Activated B cell treated with CpG ODN at 0.5 μM for 24 hours (primary cell): ENCODE measurements at regions of chr3 and their contacts with region 1.

Region 1: DNA sequence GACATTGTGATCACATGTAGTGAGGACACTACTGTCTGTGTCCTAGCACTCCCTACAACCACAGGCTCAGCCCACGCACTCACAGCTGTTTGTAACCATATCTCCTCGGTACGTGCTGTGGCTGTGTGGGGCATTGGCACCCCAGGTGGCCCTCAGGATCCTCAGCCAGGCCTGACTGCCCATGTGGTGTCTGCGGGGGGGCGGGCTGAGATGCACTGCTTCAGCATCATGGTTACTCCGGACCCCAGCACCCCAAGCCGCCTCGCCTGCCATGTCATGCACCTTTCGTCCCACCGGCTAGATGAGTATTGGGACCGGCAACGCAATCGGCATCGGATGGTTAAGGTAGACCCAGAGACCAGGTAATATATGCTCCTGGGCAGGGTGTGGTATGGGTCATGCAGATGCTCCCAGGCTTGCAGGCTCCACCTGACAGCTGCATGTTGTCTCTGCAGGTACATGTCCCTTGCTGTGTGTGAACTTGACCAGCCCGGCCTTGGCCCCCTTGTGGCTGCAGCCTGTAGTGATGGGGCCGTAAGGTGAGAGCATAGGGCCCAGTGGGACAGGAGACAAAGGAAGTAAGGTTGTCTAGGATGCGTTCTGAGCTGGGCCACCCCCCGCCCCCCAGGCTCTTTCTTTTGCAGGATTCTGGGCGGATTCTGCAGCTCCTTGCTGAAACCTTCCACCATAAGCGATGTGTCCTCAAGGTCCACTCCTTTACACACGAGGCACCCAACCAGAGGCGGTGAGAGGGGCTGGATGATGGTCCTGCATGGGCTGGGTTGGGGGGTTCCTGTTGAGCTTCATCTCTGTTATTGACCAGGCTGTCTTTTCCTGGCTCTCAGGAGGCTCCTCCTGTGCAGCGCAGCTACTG is 4.4 kb downstream of the DALRD3 start:
- DNase-seq: peak; percentile 57
- ATAC-seq: peak; percentile 63
- H3K4me3 Mint-ChIP-seq: no peak overlapping the region
- H3K27ac Mint-ChIP-seq: no peak overlapping the region
- H3K4me1 Mint-ChIP-seq: peaks cover 21% of the 10 kb centered on the region
- H3K27me3 Mint-ChIP-seq: no peaks in the 10 kb centered on the region
- CTCF ChIP-seq: no peak

Region 2: GRCh38 chr3:48989796-48990635 is 24.0 kb before region 1 on chr3 and contains the start of gene P4HTM:
- CTCF ChIA-PET with region 1: interaction called, 57 read pairs
- POLR2A ChIA-PET with region 1: interaction called, 8 read pairs
- intact Hi-C with region 1: loop called (anchors 1 kb)
- DNase-seq: peak; percentile 58
- ATAC-seq: peak; percentile 64
- H3K4me3 Mint-ChIP-seq: peak within 1 kb of the TSS; percentile 92
- H3K27ac Mint-ChIP-seq: peak within 1 kb of the TSS; percentile 83
- H3K4me1 Mint-ChIP-seq: peaks cover 28% of the 10 kb centered on the region
- H3K27me3 Mint-ChIP-seq: no peaks in the 10 kb centered on the region
- CTCF ChIP-seq: no peak
- total RNA-seq, gene P4HTM: 26.0 and 34.4 TPM in 2 replicates

Region 3: DNA sequence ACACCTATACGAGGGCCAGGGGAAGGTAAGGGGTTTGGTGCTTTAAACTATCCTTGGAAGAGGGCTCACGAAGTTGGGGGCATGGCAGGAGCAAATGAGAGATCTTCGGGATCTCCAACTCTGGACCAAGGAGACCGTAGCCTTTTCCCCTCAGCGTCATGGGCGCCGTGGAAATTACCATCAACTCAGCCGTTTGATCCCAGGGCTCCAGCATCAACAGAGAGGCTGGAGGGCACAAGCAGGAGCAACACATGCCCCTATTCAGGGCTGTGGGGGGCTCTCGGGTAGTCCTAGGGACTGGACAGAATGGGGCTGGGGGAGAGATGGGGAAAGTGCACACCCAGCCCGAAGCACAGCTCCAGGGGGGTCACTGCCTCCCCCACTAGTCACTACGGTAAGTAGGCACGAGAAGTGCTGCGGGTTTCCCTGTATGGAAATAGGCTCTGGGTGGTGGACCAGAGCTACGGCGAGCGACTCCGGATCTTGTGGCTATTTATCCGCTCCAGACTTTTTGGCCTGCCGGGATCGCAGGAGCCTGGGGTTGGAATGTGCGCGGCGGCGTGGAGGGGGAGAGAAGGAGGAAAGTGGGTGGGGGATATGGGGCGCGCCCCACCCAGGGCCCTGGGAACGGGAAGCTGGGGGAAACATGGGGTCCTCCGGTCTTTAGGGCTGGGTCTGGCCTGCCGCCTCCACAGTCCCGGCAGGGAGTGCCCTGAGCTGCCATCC is 119.4 kb after region 1 on chr3:
- CTCF ChIA-PET with region 1: no interaction called
- POLR2A ChIA-PET with region 1: interaction called, 13 read pairs
- intact Hi-C with region 1: no loop called
- DNase-seq: no peak
- ATAC-seq: no peak
- H3K4me3 Mint-ChIP-seq: peak overlapping the region; percentile 44
- H3K27ac Mint-ChIP-seq: no peak overlapping the region
- H3K4me1 Mint-ChIP-seq: peaks cover 2% of the 10 kb centered on the region
- H3K27me3 Mint-ChIP-seq: peaks cover 19% of the 10 kb centered on the region
- CTCF ChIP-seq: no peak